HEK293 (cell line): ENCODE measurements at regions of chr20 and their contacts with region 1.

Region 1: DNA sequence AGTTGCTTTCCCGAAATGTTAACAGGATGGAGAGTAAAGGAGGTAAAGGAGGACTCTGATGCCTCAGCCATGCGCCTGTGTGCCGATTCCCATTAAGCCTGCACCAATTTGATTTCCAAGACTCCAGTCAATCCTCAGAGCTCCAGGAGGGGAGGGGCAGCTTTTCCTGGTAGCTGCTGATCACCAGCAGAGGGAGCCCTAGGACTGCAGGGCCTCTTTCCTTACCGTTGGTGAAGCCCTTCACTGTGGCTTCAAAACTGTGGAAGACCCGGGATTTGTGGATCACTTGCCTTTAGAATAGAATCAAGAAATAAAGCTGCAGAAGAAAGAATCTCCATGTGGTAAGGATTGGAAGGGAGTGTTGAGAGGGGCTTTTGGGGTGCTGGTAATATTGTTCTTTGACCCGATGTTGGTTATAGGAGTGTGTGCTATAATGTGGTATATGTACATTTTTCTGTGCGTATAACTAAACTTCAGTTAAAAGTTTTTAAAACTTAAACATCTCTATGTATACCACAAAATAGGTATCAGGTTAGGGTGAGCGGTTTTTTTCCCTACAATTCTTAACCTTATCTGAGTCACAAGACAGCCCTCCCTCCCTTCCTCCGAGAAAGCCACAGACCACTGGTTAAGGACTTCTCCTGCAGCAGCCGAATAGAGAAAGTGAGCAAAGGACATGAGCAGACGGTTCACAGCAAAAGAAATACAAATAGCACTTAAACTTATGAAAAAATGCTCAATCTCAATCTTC is 6.9 kb upstream of the OSER1 start:
- H3K4me3 ChIP-seq: no peak overlapping the region
- H3K27ac ChIP-seq: no peak overlapping the region
- H3K4me1 ChIP-seq: no peaks in the 10 kb centered on the region
- CTCF ChIP-seq: peak; percentile 85

Region 2: DNA sequence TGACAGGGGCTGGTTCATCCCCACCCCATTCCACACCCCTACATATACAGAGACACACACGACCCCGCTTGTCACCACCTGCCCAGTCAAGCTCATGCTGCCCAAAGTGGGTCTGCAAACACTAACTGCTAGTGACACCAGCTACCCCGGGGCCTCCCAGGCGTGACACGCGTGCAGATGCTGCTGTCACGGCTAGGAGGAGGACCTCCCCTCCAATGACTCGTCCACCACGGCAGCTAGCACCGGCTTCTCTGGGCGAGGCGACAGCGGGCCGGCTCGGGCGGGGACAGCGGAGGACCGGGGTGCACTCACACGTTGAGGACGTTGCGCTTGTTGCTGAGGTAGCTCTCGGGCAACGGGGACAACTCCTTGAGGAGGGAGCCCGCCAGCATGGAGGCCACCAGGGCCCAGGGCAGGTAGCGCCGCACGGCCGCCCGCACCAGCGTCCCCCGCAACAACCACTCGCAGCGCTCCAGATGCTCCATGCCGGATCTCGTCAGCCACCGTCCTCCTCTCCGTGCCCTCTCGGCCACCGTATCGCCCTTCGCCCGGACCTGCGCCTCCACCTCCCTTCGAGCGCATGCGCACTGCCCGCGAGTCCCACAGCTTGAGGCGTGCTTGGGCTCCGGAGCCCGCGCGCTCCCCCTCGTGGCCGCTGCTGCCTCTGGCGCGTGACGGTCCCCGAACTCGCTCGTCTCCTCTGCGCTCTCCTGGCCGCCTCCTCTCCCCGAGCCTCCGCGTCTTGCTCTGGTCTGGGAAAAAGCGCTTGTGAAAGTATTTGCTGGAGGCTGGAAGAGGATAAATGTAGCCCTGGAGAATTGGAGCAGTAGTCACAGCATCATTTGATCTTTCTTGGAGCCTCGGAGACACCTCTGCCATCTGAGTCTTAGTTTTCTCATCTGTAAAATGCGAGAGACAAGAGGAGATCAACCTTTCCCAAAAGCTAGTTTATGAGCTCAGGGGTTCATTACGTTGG is 93.4 kb after region 1 on chr20 and contains the start of gene FITM2:
- CTCF ChIA-PET with region 1: interaction called, 187 read pairs
- POLR2A ChIA-PET with region 1: interaction called, 3 read pairs
- H3K4me3 ChIP-seq: peak within 1 kb of the TSS; percentile 68
- H3K27ac ChIP-seq: peak within 1 kb of the TSS; percentile 37; the same call in 1 of the 2 replicates
- H3K4me1 ChIP-seq: no peaks in the 10 kb centered on the region
- CTCF ChIP-seq: peak; percentile 100

Region 3: DNA sequence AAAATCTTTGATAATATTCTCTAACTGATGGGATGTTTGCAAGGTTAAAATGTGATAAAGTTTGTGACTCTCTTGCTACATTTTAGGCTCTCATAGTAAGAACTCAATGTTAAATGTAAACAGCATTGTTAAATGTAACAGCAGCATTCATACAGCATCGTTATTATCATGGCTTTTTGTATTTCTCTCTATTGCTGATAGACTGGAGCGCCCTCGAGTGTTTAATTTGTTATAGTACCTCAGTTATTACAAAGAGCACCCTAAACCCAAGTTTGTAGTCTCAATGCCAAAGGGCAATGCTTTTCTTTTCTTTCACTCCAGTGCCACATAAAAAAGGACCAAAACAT is 243.3 kb after region 1 on chr20:
- CTCF ChIA-PET with region 1: interaction called, 36 read pairs
- POLR2A ChIA-PET with region 1: no interaction called
- H3K4me3 ChIP-seq: no peak overlapping the region
- H3K27ac ChIP-seq: no peak overlapping the region
- H3K4me1 ChIP-seq: no peaks in the 10 kb centered on the region
- CTCF ChIP-seq: no peak

Region 4: GRCh38 chr20:44495802-44496481 is 278.4 kb after region 1 on chr20:
- CTCF ChIA-PET with region 1: no interaction called
- POLR2A ChIA-PET with region 1: no interaction called
- H3K4me3 ChIP-seq: no peak overlapping the region
- H3K27ac ChIP-seq: no peak overlapping the region
- H3K4me1 ChIP-seq: no peaks in the 10 kb centered on the region
- CTCF ChIP-seq: no peak

Region 5: DNA sequence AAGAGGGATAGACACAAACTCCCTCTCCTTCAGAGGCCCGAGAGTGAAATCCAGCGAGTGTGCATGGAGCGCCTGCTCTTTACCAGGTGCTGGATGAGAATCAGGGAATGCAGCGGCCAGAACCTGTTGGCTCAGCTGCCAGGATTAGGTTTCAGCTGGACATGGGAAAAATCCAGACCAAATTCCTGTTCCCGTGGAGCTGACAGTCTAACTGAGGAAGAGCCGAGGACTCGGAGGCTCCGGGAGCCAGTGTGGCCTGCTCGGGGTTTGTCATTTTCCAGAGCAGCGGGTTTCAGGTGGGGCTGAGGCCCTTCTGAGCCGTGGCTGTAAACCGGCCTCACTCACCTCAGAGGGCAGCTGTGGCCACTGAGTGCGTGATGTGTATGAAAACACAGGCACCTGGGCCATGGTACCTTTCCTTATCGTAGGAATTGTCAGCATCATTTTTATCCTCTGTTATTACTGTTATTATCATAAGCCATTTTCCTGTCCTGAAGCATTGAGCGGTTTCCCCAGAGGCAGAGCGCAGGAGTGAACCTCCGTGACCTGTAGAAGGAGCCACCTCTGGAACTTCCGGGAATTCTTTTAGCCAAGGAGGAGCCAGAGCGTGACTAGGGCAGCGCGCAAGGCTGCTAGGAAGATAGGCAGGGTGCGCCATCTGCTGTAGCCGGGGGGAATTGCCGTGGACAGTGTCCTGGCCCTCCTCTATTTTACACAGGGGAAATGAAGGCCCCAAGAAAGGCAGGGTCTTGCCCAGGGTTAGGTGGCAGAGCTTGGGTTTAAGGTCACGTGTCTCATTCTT is 392.2 kb after region 1 on chr20:
- CTCF ChIA-PET with region 1: interaction called, 26 read pairs
- POLR2A ChIA-PET with region 1: no interaction called
- H3K4me3 ChIP-seq: no peak overlapping the region
- H3K27ac ChIP-seq: no peak overlapping the region
- H3K4me1 ChIP-seq: no peaks in the 10 kb centered on the region
- CTCF ChIP-seq: peak; percentile 97